BJ (cell line): ENCODE measurements at regions of chr4 and their contacts with region 1.

Region 1: GRCh38 chr4:37603070-37603468 is 83.1 kb downstream of the RELL1 start:
- DNase-seq: no peak
- H3K4me3 ChIP-seq: no peak overlapping the region
- H3K27me3 ChIP-seq: no peaks in the 10 kb centered on the region
- CTCF ChIP-seq: peak; percentile 98

Region 2: DNA sequence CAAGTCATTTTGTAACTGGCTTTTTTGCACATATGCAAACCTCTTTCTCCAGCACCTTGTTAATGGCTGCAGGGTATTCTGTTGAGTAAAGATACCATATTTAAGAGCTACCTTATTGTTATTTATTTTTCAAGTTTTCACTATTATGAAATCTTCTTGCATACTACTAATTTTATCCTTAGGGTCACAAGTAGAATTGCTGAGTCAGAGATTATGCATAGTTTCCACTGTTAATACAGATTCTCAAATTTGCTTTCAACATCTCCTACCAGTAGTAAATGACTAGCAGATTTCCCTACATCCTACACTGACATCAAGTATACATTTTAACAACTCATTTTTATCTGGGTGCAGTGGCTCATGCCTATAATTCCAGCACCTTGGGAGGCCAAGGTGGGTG is 29.5 kb before region 1 on chr4:
- CTCF ChIA-PET with region 1: no interaction called
- POLR2A ChIA-PET with region 1: no interaction called
- DNase-seq: no peak
- H3K4me3 ChIP-seq: no peak overlapping the region
- H3K27me3 ChIP-seq: no peaks in the 10 kb centered on the region
- CTCF ChIP-seq: no peak

Region 3: DNA sequence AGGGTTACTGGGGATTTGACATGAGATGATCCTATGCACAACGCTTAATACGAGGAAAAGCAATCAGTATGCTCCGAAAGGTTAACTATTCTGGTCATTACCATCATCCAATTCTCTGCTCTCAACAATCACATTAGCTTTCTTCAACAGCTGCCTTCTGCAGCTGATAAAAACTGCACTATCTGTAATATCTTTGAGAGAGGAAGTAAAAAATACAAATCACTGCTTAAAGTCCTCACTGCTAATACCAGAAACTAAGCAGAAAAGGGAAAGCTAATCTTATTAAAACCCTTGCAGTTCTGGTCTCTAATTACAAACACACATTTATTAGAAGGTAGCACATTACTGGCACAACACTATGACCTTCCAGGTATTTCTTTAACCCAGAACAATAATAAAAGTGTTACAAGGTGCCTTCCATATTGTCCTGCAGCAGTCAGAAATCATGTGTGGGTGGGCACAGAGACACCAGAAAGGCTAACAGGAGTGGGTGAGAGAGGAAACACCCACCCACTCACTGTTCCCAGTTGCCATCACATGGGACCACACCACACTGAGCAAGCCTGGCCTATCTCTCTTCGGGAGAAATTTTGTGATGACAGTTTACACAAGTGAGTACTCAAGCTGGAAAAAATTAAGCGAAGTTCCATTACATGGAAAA is 12.1 kb after region 1 on chr4:
- CTCF ChIA-PET with region 1: interaction called, 20 read pairs
- POLR2A ChIA-PET with region 1: no interaction called
- DNase-seq: no peak
- H3K4me3 ChIP-seq: no peak overlapping the region
- H3K27me3 ChIP-seq: no peaks in the 10 kb centered on the region
- CTCF ChIP-seq: no peak

Region 4: DNA sequence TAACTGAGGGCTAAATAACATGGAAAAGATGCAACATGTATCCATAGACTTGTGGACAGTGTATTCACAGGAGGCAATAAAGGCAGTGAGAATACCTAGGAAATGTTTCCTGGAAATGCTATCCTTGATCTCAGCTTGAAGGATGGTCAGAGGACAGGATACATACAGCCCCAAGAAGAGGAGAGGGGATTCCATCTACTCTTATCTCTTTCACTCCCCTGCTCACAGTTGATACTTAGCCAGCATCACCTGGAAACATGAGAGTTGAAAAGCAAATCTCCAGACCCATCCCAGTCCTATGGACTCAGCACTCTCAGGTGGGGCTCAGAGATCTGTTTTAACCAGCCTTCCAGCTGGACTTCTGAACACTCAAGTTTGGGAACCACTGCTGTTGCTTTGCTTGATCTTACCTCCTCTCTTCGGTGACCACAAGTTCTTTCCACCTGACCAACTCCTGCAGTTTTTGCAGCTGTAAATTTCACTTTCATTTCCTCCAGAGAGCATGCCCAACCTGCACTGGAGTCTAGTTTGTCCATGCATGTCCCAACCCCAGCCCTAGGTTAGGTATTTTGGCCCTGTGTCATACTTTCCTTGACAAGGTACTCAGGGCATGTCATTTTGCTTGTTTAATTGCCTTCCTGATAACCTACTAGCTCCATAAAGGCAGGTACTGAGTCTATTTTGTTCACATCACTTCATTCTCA is 72.7 kb after region 1 on chr4:
- CTCF ChIA-PET with region 1: interaction called, 3 read pairs
- POLR2A ChIA-PET with region 1: interaction called, 10 read pairs
- DNase-seq: no peak
- H3K4me3 ChIP-seq: no peak overlapping the region
- H3K27me3 ChIP-seq: no peaks in the 10 kb centered on the region
- CTCF ChIP-seq: no peak

Region 5: GRCh38 chr4:37780444-37781150 is 177.5 kb after region 1 on chr4:
- CTCF ChIA-PET with region 1: interaction called, 10 read pairs
- POLR2A ChIA-PET with region 1: no interaction called
- DNase-seq: no peak
- H3K4me3 ChIP-seq: no peak overlapping the region
- H3K27me3 ChIP-seq: peaks cover 5% of the 10 kb centered on the region
- CTCF ChIP-seq: no peak

Region 6: GRCh38 chr4:37802068-37802666 is 199.1 kb after region 1 on chr4:
- CTCF ChIA-PET with region 1: interaction called, 135 read pairs
- POLR2A ChIA-PET with region 1: no interaction called
- DNase-seq: no peak
- H3K4me3 ChIP-seq: no peak overlapping the region
- H3K27me3 ChIP-seq: 0 out of 2 replicates have a peak, but pooled peaks cover 3% of the 10 kb centered on the region
- CTCF ChIP-seq: peak; percentile 81